ENCODE measurements at regions of chr12 and their contacts with region 1.

Region 1: DNA sequence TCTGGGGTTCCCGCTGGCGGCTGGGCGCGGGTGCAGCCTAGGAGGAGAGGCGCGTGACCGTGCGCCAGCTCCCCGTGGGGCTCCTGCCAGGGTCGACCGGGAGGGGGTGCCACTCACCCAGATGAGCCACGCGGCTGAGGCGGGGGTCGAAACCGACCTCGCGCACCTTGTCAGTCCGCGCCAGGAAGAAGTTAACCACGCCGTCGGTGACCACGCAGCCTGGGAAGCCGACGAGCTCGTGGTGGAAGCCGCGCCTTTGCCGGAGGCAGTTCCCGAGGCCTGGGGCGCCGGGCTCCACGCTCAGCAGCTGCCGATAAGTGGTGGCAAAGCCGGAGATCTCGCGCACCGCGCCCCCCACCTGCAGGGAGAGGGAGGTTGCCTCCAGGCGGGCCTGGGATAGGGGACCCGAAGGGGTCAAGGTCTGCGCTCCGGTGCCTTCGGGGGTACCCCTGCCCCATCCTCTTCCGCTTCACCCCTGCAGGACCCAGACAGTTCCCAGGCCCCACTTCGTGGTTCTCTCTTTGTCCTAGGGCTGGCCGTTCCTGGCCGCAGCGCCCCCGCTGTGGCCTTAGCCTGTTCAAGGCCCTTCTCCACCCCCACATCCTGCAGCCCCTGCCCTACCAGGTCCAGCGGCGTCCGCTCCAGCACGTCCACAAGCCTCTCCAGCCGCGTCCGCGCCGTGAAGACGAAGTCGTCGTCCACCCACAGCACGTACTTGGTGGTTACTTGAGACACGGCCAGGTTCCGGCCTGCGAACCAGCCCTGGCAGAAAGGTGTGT is 5.3 kb downstream of the B4GALNT1 start:
- DNase-seq: no peak
- ATAC-seq: no peak
- H3K4me3 ChIP-seq: no peak overlapping the region
- H3K27ac ChIP-seq: no peak overlapping the region
- H3K4me1 ChIP-seq: peaks cover 5 to 29% of the 10 kb centered on the region in 2 experiments
- H3K27me3 ChIP-seq: no peaks in the 10 kb centered on the region
- CTCF ChIP-seq: no peak
- EP300 ChIP-seq: no peak
- POLR2A ChIP-seq: no peak
- RAD21 ChIP-seq: no peak

Region 2: DNA sequence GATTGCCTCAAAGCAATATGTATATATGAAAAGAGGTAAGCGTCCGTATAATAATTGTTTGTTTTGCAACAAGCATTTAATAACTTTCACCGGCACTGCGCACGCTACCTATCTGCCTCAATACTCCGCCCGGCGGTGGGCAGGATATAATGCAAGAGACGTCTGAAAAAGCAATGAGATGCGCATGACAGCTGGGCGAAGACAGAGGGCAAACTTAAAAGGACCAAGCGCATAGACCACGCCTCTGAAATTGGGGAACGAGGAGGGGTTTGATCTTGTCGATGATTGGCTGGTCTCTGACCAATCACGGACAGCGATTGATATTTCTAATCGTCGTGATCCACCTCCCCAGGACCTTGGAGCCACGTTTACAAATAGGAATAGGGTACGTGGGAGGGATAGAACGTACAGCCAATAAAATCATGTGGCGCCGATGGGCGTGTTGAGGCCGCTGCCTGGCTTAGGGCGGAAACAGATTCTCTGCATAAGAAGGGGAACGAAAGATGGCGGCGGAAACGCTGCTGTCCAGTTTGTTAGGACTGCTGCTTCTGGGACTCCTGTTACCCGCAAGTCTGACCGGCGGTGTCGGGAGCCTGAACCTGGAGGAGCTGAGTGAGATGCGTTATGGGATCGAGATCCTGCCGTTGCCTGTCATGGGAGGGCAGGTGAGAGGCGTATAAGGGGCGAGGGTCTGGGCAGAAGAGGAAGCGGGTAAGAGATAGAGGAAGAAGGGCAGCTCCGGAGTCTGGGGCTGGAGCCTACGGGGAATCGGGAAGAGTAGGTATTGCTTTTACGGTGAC is 66.2 kb after region 1 on chr12 and contains the start of gene OS9:
- CTCF ChIA-PET with region 1: interaction called, 3 read pairs
- POLR2A ChIA-PET with region 1: no interaction called
- in situ Hi-C with region 1: loop called (anchors 5 kb)
- intact Hi-C with region 1: no loop called
- DNase-seq: peak; percentile 99 to 100 (median 99)
- ATAC-seq: peak; percentile 99
- H3K4me3 ChIP-seq: peak within 1 kb of the TSS; percentile 82
- H3K27ac ChIP-seq: peak within 1 kb of the TSS; percentile 80
- H3K4me1 ChIP-seq: peaks cover 4 to 10% of the 10 kb centered on the region in 2 experiments; a peak in 3 of 5 replicates
- H3K27me3 ChIP-seq: no peaks in the 10 kb centered on the region
- CTCF ChIP-seq: peak; percentile 92 to 95 (median 94)
- EP300 ChIP-seq: no peak
- POLR2A ChIP-seq: peak; percentile 95
- RAD21 ChIP-seq: peak; percentile 69 to 70
- polyA plus RNA-seq, gene OS9: 4.6 to 7.9 TPM

Region 3: GRCh38 chr12:57712701-57713100 is 85.0 kb after region 1 on chr12:
- CTCF ChIA-PET with region 1: no interaction called
- POLR2A ChIA-PET with region 1: no interaction called
- in situ Hi-C with region 1: no loop called
- intact Hi-C with region 1: no loop called
- DNase-seq: no peak
- ATAC-seq: no peak
- H3K4me3 ChIP-seq: no peak overlapping the region
- H3K27ac ChIP-seq: no peak overlapping the region
- H3K4me1 ChIP-seq: no peaks in the 10 kb centered on the region; a peak in 2 of 5 replicates
- H3K27me3 ChIP-seq: no peaks in the 10 kb centered on the region
- CTCF ChIP-seq: no peak
- EP300 ChIP-seq: no peak
- POLR2A ChIP-seq: no peak
- RAD21 ChIP-seq: no peak

Region 4: GRCh38 chr12:57729321-57729844 is 101.7 kb after region 1 on chr12:
- CTCF ChIA-PET with region 1: no interaction called
- POLR2A ChIA-PET with region 1: no interaction called
- in situ Hi-C with region 1: loop called (anchors 5 kb)
- intact Hi-C with region 1: no loop called
- DNase-seq: no peak
- ATAC-seq: no peak
- H3K4me3 ChIP-seq: no peak overlapping the region
- H3K27ac ChIP-seq: no peak overlapping the region
- H3K4me1 ChIP-seq: peaks cover 0 to 17% of the 10 kb centered on the region in 2 experiments; a peak in 2 of 5 replicates
- H3K27me3 ChIP-seq: peaks cover 33 to 50% of the 10 kb centered on the region in 2 experiments
- CTCF ChIP-seq: no peak
- EP300 ChIP-seq: no peak
- POLR2A ChIP-seq: no peak
- RAD21 ChIP-seq: no peak